ENCODE measurements at regions of chr13 and their contacts with region 1.

Region 1: DNA sequence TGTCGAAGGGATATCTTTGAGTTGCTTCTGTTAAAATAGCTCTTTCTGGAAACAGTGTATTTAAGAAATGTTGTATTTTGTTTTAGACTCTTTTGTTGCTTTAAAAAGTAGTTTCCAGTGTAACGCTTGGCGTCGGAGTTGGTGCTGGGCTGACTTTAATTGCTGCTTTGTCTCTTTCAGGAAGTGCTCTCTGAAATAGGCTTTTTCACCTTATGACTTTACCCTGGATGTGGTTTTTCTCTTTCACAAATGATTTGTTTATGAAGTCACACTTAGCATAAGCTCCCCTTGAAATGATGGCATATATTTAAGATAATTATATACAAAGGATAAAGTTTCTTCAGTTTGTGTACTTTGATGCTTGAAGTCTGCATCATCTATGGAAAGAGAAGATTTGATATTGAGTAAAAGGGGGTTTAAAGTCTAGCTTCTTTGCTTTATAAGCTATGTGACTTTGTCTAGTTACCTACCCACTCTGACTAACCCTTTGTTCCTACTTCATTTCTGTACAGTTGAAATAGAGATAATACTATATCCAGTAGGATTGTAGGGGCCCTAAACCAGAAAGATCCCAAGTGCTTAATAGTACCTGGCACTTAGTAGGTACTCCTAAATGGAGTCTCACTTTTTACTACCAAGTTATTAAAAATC is at the start of gene GPR18:
- DNase-seq: peak; percentile 61
- H3K4me3 Mint-ChIP-seq: peak within 1 kb of the TSS; percentile 81
- H3K27ac Mint-ChIP-seq: peak within 1 kb of the TSS; percentile 91
- H3K4me1 Mint-ChIP-seq: peaks cover 72% of the 10 kb centered on the region
- H3K27me3 Mint-ChIP-seq: no peaks in the 10 kb centered on the region
- total RNA-seq, gene GPR18: 2.4 TPM

Region 2: GRCh38 chr13:98998831-98999638 is 259.3 kb before region 1 on chr13:
- CTCF ChIA-PET with region 1: no interaction called
- intact Hi-C with region 1: loop called (anchors 5 kb)
- DNase-seq: peak; percentile 66
- H3K4me3 Mint-ChIP-seq: no peak overlapping the region
- H3K27ac Mint-ChIP-seq: peak overlapping the region; percentile 67
- H3K4me1 Mint-ChIP-seq: peaks cover 92% of the 10 kb centered on the region
- H3K27me3 Mint-ChIP-seq: no peaks in the 10 kb centered on the region

Region 3: DNA sequence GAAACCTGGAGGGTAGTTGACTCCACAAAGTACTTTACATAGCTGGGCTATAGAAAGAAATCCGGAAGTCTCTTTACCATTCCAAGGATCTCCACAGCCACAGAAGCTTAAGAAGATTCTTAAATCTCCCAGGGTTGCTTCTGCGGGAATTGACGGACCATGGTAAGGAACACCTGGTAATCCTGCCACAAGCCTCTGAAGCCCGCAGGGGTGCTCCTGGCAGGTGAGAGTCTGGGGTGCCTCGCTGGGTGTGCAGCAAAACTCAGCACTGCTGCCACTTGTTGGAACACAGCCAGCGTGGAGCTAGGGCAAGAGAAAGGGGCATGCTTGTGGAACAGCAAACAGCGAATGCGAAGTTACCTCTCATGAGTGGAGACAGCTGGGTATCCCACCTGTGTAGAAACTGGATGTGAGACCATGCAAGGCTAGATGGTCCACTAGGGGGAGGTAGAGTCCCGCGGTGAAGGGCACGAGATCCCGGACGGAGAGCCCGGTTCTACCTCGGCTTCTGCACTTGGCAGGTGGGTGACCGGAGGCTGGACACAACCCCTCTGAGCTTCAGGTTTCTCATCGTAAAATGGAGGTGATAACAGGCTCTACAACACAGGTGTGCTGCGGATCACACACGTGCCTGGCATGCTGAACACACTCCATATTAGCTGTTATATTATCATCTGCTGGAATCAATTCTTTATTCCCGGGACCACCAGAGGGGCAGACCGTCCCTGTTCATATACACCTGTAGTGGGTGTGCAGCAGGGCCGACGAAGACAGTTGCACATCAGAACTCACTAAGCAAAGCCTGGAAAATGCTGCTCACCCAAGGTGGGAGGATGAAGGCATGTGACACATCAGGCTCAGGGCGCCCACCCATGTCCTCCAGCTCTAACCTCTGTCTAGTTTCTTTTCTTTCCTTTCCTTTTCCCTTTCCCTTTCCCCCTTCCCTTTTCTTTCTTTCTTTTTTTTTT is 81.7 kb before region 1 on chr13:
- CTCF ChIA-PET with region 1: interaction called, 226 read pairs
- intact Hi-C with region 1: no loop called
- DNase-seq: peak; percentile 87
- H3K4me3 Mint-ChIP-seq: peak overlapping the region; percentile 48
- H3K27ac Mint-ChIP-seq: no peak overlapping the region
- H3K4me1 Mint-ChIP-seq: peaks cover 35% of the 10 kb centered on the region
- H3K27me3 Mint-ChIP-seq: no peaks in the 10 kb centered on the region

Region 4: GRCh38 chr13:99190147-99190985 is 68.0 kb before region 1 on chr13:
- CTCF ChIA-PET with region 1: no interaction called
- intact Hi-C with region 1: no loop called
- DNase-seq: no peak
- H3K4me3 Mint-ChIP-seq: no peak overlapping the region
- H3K27ac Mint-ChIP-seq: no peak overlapping the region
- H3K4me1 Mint-ChIP-seq: peaks cover 6% of the 10 kb centered on the region
- H3K27me3 Mint-ChIP-seq: no peaks in the 10 kb centered on the region

Region 5: DNA sequence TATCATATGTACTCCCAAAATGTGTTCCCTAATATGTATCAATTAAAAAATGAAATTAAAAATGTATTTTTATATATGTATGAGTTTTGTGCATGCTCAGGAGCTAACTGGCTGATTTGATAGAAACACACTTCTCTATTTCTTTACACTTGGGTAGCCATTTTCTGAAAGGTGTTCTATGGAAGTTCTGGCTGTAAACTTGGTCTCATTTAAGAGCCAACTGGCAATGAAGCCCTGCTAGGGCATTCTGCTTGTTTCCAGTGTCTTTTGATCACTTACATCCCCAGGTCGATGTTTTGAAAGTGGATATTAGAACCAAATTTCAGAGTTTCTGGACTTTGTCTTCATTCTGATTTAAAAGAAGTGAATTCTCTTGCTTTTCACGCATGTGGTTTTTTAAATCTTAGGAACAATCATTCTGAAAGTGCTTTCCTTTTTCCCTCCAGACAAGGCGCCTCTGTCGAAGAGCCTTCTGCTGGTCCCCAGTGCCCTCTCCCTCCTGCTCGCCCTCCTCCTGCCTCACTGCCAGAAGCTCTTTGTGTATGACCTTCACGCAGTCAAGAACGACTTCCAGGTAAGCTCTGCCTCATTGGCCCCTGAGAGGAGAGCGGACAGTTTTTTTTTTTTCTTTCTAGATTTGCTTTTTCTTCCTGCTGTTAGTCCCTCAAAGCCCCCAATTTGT is 20.2 kb before region 1 on chr13:
- CTCF ChIA-PET with region 1: interaction called, 6 read pairs
- intact Hi-C with region 1: loop called (anchors 1 kb)
- DNase-seq: peak; percentile 54
- H3K4me3 Mint-ChIP-seq: peak overlapping the region; percentile 73
- H3K27ac Mint-ChIP-seq: peak overlapping the region; percentile 92
- H3K4me1 Mint-ChIP-seq: peaks cover 62% of the 10 kb centered on the region
- H3K27me3 Mint-ChIP-seq: no peaks in the 10 kb centered on the region

Region 6: GRCh38 chr13:99307648-99308339 is 49.5 kb after region 1 on chr13:
- CTCF ChIA-PET with region 1: no interaction called
- intact Hi-C with region 1: loop called (anchors 1 kb)
- DNase-seq: peak; percentile 89
- H3K4me3 Mint-ChIP-seq: peak overlapping the region; percentile 93
- H3K27ac Mint-ChIP-seq: peak overlapping the region; percentile 99
- H3K4me1 Mint-ChIP-seq: peaks cover 73% of the 10 kb centered on the region
- H3K27me3 Mint-ChIP-seq: no peaks in the 10 kb centered on the region

Region 7: GRCh38 chr13:99446242-99446641 is 187.9 kb after region 1 on chr13:
- CTCF ChIA-PET with region 1: no interaction called
- intact Hi-C with region 1: no loop called
- DNase-seq: no peak
- H3K4me3 Mint-ChIP-seq: no peak overlapping the region
- H3K27ac Mint-ChIP-seq: no peak overlapping the region
- H3K4me1 Mint-ChIP-seq: no peaks in the 10 kb centered on the region
- H3K27me3 Mint-ChIP-seq: no peaks in the 10 kb centered on the region

Measured in activated naive CD4-positive, alpha-beta T cell treated with anti-CD3 and anti-CD28 coated beads for 36 hours (primary cell).